GM10248 (cell line): ENCODE measurements at regions of chr16 and their contacts with region 1.

Region 1: DNA sequence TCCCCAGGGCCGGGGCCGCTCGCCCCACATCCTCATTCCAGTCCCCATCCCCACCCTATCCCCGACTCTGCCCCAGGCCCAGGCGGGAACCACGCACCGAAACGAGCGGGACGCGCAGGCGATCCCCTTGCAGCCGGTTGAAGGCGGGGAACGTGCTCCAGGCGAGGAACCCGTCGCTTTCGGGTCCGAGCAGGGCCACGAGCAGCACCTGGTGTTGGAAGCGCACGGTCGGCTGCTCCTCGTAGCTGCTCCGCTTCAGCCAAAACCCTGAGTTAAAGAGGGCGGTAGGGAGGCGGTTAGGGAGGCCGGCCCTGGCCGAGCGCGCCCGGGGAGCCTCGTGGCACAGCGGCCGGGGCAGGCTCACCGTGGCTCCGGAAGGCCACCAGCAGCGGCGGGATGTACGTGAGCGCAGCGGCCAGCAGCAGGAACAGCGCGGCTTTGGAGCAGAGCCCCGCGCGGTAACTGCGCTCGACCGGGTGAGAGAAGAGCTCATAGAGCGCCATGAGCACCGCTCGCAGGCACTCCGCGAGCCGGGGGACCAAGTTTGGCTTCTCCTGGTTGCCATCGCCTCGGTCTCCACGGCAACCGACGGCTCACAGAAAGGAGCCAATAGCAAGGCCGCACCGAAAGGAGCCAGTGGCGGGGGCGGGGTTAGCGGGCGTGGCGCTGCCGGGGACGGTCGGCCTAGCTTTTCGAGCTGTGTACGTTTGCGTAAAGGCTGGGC is at the start of gene TMEM231:
- DNase-seq: peak; percentile 97
- CTCF ChIP-seq: no peak

Region 2: DNA sequence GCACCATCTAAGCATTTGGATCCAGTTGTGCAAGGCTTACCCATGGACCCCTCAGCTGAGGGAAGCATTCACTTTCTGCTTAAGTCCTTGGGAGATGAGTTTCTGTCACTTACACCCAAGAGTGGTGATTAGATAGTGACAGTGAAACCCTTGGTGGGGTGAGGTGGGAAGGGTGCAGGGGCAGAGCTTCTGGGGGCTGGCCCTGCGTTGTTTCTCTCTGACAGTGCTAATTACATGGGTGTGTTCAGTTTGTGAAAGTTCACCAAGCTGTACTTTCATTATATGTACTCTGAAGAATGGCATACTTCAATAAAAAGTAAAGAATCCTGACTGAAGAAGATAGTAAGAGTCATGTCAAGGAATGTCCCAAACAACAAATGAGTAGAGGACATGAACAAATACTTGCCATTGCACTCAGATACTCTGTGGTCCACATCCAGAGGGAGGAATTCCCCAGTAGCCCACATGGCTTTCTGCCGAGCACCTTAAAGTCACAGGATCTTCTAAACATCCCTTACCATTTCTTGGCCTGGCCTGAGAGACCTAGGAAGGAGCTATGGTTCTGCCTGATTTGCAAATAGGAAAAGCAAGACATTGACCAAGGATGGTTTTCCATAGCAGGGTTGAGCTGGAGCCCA is 69.1 kb before region 1 on chr16:
- CTCF ChIA-PET with region 1: no interaction called
- POLR2A ChIA-PET with region 1: no interaction called
- DNase-seq: peak; percentile 61
- CTCF ChIP-seq: no peak

Region 3: DNA sequence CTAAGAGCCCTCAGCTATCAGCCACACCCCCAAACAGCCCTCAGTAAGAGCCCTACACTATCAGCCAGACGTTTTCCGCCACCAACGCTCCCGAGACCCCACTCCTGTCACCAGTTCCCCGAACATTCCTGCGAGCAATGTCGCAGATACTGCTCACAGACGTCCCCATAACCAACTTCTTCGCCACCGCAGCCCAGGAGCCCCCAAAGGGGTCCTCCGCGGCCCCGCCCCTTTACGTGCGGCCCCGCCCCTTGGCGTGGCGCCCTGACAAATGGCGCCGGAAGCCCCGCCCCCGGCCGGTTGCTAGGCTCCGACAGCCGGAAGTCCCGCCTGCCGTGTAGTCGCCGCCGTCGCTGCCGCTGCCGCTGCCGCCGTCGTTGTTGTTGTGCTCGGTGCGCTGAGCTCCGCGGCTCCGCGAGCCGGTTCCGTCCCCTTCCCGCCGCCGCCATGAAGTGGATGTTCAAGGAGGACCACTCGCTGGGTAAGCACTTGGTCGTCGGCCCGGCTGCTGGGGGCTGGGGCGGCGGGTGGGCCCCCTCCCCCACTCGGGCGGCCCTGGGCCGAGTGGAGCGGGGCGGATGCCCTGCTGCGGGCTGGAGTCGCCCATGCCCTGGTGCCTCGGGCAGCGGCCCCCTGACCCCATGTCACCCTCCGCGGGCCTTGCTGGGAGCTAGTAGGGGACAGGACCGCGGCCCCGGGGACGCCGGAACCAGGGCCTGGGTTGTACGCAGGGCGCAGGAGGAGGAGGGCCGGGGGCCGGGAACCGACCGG is 10.4 kb after region 1 on chr16 and contains the start of gene GABARAPL2:
- CTCF ChIA-PET with region 1: interaction called, 26 read pairs
- POLR2A ChIA-PET with region 1: interaction called, 10 read pairs
- DNase-seq: peak; percentile 91
- CTCF ChIP-seq: no peak

Region 4: DNA sequence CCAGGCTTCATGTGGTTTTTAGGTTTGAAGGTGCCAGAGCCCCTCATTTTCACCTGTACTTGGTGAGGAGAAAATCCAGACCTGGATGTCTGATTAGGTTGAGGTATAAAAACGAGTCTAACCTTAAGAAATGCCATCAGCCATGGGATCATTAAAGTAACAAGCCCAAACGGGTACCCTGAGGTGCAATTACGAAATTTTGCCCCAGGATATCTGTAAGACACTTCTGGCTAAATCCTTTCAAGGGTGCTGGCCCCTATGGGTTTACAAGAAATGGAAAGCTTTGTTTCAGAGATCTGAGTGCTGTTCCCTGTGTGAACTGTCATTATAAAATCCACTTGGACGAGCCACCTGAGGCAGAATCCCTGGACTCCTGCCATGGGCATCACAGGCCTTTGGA is 47.4 kb after region 1 on chr16:
- CTCF ChIA-PET with region 1: no interaction called
- POLR2A ChIA-PET with region 1: no interaction called
- DNase-seq: no peak
- CTCF ChIP-seq: no peak